PC-9 (cell line): ENCODE measurements at regions of chr7 and their contacts with region 1.

Region 1: GRCh38 chr7:81285142-81285871 is 366.5 kb upstream of the SEMA3C start:
- DNase-seq: peak; percentile 9 to 68
- H3K4me3 ChIP-seq: no peak overlapping the region
- H3K27ac ChIP-seq: peak overlapping the region; percentile 47
- H3K4me1 ChIP-seq: peaks cover 10% of the 10 kb centered on the region
- H3K27me3 ChIP-seq: no peaks in the 10 kb centered on the region
- CTCF ChIP-seq: no peak

Region 2: DNA sequence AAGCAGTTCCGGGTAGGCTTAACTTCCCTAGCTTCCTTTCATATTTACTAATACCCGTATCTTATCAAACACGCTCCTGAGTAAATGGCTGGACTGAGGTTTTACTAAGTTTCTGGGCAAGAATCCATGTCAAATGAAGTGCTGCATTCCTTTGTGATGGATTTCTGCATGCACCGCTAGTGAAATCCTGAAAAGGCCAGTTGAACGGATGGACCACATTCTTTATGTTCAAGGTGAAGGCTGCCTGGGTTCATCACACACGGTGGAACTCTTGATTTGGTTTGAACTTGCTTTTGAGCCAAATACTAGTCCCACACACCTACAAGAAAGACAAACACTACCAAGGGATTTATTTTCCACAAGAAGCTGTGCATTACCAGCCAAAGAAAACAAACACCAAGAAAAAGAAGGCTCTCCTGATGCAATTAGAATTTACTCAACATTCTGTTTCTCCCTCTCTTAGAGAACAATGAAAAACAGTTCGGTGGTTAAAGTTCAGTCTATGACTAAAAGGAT is 111.5 kb before region 1 on chr7:
- CTCF ChIA-PET with region 1: no interaction called
- POLR2A ChIA-PET with region 1: no interaction called
- intact Hi-C with region 1: loop called (anchors 5 kb)
- DNase-seq: peak in 1 of 2 experiments; percentile 48
- H3K4me3 ChIP-seq: no peak overlapping the region
- H3K27ac ChIP-seq: no peak overlapping the region
- H3K4me1 ChIP-seq: peaks cover 13% of the 10 kb centered on the region; the same call in 1 of the 2 replicates
- H3K27me3 ChIP-seq: no peaks in the 10 kb centered on the region
- CTCF ChIP-seq: no peak